Lower leg skin (tissue), 4 donors: ENCODE measurements at regions of chr1 and their contacts with region 1.

Region 1: GRCh38 chr1:147172168-147172992 is at the start of gene PRKAB2:
- DNase-seq: peak; percentile 94 to 99
- H3K4me3 ChIP-seq: peak within 1 kb of the TSS; percentile 91
- CTCF ChIP-seq: peak in 1 of 3 donors; percentile 88
- POLR2A ChIP-seq: no peak
- total RNA-seq, gene PRKAB2: 21.4 to 29.8 (median 25.9) TPM

Region 2: GRCh38 chr1:147242439-147243227 is 70.3 kb after region 1 on chr1 and contains the start of gene CHD1L:
- intact Hi-C with region 1: loop called (anchors 5 kb)
- DNase-seq: peak; percentile 94 to 99
- H3K4me3 ChIP-seq: peak within 1 kb of the TSS; percentile 80
- CTCF ChIP-seq: no peak
- POLR2A ChIP-seq: no peak
- total RNA-seq, gene CHD1L: 12.7 to 20.6 (median 16.9) TPM